Activated CD4-positive, alpha-beta T cell treated with anti-CD3 and anti-CD28 coated beads, Interleukin-2, amount 10 ng/mL, durations not matched to agents 7 days and 5 days (primary cell): ENCODE measurements at regions of chr15 and their contacts with region 1.

Region 1: DNA sequence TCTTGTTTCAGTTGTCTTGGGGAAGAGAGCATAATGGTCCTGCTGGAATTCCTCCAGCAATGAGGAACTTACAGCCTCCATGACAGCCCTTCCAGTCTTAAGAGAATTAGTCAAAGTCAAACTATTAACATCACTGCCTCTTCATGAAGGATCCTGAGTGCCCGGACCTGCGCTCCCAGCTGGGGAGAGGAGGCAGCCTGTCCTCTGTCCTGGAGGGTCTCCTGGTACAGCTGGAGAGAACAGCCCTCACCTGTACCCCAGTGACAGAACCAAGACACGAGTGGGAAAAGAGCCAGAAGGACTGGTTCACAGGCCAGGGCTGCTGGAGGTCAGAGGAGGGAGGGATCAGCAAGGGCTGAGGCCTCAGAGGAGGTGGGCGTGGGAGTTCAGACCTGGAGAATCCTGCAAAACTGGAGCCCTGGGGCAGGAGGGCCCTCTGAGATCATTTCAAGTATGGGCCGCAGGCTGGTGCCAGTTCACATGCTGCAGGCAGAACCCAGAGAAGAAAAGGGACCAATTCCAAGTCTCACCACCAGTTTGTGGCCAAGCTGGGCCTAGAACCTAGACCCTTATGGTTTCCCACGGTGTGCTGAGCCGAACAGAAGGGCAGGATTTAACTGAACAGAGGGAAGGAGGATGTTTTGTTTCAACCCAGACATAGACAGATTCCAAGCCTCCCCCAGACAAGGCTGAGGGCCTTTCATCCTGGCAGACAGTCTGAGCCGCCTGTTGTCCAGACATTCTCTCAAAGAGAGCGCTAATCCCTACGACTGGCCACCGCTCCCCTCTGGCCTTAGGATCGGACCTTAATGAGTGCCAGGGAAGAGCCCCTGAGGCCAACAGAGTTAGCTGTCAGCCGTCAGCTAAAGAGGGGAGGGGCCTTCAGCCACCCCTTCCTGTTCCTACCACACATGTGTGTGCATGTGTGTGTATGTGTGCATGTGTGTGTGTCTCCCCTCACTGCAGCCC is 18.2 kb downstream of the LOXL1 start:
- DNase-seq: no peak
- H3K4me3 Mint-ChIP-seq: no peak overlapping the region
- H3K27ac Mint-ChIP-seq: no peak overlapping the region
- H3K4me1 Mint-ChIP-seq: peaks cover 22% of the 10 kb centered on the region
- H3K27me3 Mint-ChIP-seq: peaks cover 4% of the 10 kb centered on the region

Region 2: GRCh38 chr15:73927476-73928240 is 16.8 kb before region 1 on chr15:
- CTCF ChIA-PET with region 1: interaction called, 11 read pairs
- POLR2A ChIA-PET with region 1: no interaction called
- DNase-seq: peak; percentile 73
- H3K4me3 Mint-ChIP-seq: peak overlapping the region; percentile 69
- H3K27ac Mint-ChIP-seq: peak overlapping the region; percentile 63
- H3K4me1 Mint-ChIP-seq: peaks cover 58% of the 10 kb centered on the region
- H3K27me3 Mint-ChIP-seq: peaks cover 3% of the 10 kb centered on the region